Right lobe of liver (tissue), 6 donors: ENCODE measurements at regions of chr2 and their contacts with region 1.

Region 1: GRCh38 chr2:6909431-6910385 is 7.5 kb upstream of the RNF144A start:
- DNase-seq: no peak
- ATAC-seq: peak in 2 of 4 donors; percentile 34 to 42
- H3K4me3 ChIP-seq: no peak overlapping the region
- H3K27ac ChIP-seq: no peak overlapping the region
- H3K4me1 ChIP-seq: no peaks in the 10 kb centered on the region
- H3K27me3 ChIP-seq: no peaks in the 10 kb centered on the region
- CTCF ChIP-seq: no peak
- POLR2A ChIP-seq: no peak

Region 2: GRCh38 chr2:6960659-6961058 is 51.0 kb after region 1 on chr2:
- intact Hi-C with region 1: no loop called
- DNase-seq: peak in 1 of 3 donors; percentile 28
- ATAC-seq: peak; percentile 49 to 68 (median 62)
- H3K4me3 ChIP-seq: no peak overlapping the region
- H3K27ac ChIP-seq: no peak overlapping the region
- H3K4me1 ChIP-seq: no peaks in the 10 kb centered on the region
- H3K27me3 ChIP-seq: no peaks in the 10 kb centered on the region
- CTCF ChIP-seq: no peak
- POLR2A ChIP-seq: no peak

Region 3: GRCh38 chr2:7044261-7045250 is 134.8 kb after region 1 on chr2:
- intact Hi-C with region 1: loop called in 1 of 2 experiments (anchors 5 kb)
- DNase-seq: peak; percentile 65 to 78 (median 68)
- ATAC-seq: peak; percentile 93 to 97 (median 96)
- H3K4me3 ChIP-seq: no peak overlapping the region
- H3K27ac ChIP-seq: no peak overlapping the region
- H3K4me1 ChIP-seq: no peaks in the 10 kb centered on the region
- H3K27me3 ChIP-seq: no peaks in the 10 kb centered on the region
- CTCF ChIP-seq: peak; percentile 90 to 94 (median 94)
- POLR2A ChIP-seq: no peak

Region 4: DNA sequence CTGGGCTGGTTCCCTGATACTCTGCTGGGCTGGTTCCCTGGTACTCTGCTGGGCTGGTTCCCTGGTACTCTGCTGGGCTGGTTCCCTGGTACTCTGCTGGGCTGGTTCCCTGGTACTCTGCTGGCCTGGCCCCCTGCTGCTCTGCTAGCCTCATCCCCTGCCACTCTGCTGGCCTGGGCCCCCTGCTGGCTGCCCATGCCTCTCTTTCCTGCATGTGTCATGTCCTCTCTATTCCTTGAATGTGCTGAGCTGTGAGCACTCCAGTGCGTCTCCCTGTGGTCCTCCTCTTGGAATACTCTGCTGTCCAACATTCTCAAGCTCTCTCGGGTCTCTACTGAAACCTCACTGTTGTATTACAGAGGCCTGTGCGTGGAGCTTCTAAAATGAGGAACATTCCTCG is 223.8 kb after region 1 on chr2:
- intact Hi-C with region 1: no loop called
- DNase-seq: no peak
- ATAC-seq: peak in 1 of 4 donors; percentile 33
- H3K4me3 ChIP-seq: no peak overlapping the region
- H3K27ac ChIP-seq: no peak overlapping the region
- H3K4me1 ChIP-seq: no peaks in the 10 kb centered on the region
- H3K27me3 ChIP-seq: no peaks in the 10 kb centered on the region
- CTCF ChIP-seq: no peak
- POLR2A ChIP-seq: no peak